Prostate gland (tissue), 2 donors: ENCODE measurements at regions of chr20 and their contacts with region 1.

Region 1: DNA sequence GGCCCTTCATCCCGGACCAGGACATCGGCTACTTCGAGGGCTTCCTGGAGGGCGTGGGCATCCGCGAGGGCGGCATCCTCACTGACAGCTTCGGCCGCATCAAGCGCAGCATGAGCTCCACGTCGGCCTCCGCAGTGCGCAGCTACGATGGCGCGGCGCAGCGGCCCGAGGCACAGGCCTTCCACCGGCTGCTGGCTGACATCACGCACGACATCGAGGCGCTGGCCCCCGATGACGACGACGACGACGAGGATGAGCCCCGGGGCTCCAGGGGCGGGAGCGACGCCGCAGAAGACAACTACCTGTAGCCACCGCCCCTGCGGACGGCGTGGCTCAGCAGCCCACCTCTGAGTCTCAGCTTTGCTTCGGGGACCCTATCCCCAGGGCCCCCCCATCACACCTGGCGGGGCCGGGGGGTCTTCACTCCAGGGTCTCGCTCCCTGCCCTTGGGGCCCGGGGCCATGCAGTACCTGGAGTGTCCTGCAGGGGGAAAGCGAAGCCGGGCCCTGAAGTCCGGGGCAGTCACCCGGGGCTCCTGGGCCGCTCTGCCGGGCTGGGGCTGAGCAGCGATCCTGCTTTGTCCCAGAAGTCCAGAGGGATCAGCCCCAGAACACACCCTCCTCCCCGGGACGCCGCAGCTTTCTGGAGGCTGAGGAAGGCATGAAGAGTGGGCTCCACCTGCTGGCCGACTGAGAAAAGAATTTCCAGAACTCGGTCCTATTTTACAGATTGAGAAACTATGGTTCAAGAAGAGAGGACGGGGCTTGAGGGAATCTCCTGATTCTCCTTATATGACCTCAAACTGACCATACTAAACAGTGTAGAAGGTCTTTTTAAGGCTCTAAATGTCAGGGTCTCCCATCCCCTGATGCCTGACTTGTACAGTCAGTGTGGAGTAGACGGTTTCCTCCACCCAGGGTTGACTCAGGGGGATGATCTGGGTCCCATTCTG is 20.8 kb upstream of the HCK start:
- DNase-seq: peak; percentile 71
- H3K4me3 ChIP-seq: peak overlapping the region in 1 of 2 donors; percentile 18
- H3K27ac ChIP-seq: no peak overlapping the region
- H3K4me1 ChIP-seq: peaks cover 5% of the 10 kb centered on the region
- H3K27me3 ChIP-seq: no peaks in the 10 kb centered on the region
- CTCF ChIP-seq: peak; percentile 66 to 86 (median 76)
- POLR2A ChIP-seq: no peak

Region 2: GRCh38 chr20:31822421-31823330 is 208.6 kb before region 1 on chr20:
- intact Hi-C with region 1: loop called (anchors 2 kb)
- DNase-seq: peak; percentile 56
- H3K4me3 ChIP-seq: no peak overlapping the region
- H3K27ac ChIP-seq: no peak overlapping the region
- H3K4me1 ChIP-seq: no peaks in the 10 kb centered on the region
- H3K27me3 ChIP-seq: no peaks in the 10 kb centered on the region
- CTCF ChIP-seq: peak; percentile 93 to 98 (median 96)
- POLR2A ChIP-seq: no peak

Region 3: DNA sequence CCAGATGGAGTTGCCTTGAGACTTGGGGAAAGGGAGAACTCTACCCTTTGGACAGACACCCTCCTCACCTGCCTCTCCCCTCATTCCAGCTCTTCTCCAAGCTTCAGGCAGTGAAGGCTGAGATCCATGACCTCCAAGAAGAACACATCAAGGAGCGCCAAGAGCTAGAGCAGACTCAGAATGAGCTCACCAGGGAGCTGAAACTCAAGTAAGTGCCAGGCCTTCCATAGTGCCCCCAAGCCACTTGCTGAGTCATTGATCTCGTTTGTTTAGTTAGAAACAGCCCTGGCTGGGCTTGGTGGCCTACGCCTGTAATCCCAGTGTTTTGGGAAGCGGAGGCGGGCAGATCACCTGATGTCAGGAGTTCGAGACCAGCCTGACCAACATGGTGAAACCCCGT is 285.4 kb after region 1 on chr20:
- intact Hi-C with region 1: no loop called
- DNase-seq: no peak
- H3K4me3 ChIP-seq: no peak overlapping the region
- H3K27ac ChIP-seq: no peak overlapping the region
- H3K4me1 ChIP-seq: no peaks in the 10 kb centered on the region
- H3K27me3 ChIP-seq: no peaks in the 10 kb centered on the region
- CTCF ChIP-seq: no peak
- POLR2A ChIP-seq: no peak